ENCODE measurements at regions of chr1 and their contacts with region 1.

Region 1: GRCh38 chr1:32886004-32886827 is at the start of gene HPCA:
- DNase-seq: no peak
- H3K4me3 ChIP-seq: no peak within 1 kb of the TSS; the same call in 1 of the 2 replicates
- H3K27me3 ChIP-seq: peaks cover 22% of the 10 kb centered on the region
- CTCF ChIP-seq: peak; percentile 81
- polyA plus RNA-seq, gene HPCA: not detected in 2 replicates

Region 2: GRCh38 chr1:32870615-32871363 is 15.4 kb before region 1 on chr1 and contains the start of gene FNDC5:
- CTCF ChIA-PET with region 1: interaction called, 43 read pairs
- POLR2A ChIA-PET with region 1: no interaction called
- DNase-seq: no peak
- H3K4me3 ChIP-seq: peak within 1 kb of the TSS; percentile 40
- H3K27me3 ChIP-seq: peaks cover 7% of the 10 kb centered on the region
- CTCF ChIP-seq: 0 out of 2 replicates have a peak, but pooled peaks have one; percentile 1
- polyA plus RNA-seq, gene FNDC5: 1.1 and 1.2 TPM in 2 replicates

Measured in BJ (cell line).